ENCODE measurements at regions of chr4 and their contacts with region 1.

Region 1: GRCh38 chr4:121726642-121727268 is 30.0 kb upstream of the ANXA5 start:
- DNase-seq: peak; percentile 36
- H3K4me3 Mint-ChIP-seq: no peak overlapping the region
- H3K27ac Mint-ChIP-seq: no peak overlapping the region
- H3K4me1 Mint-ChIP-seq: peaks cover 5% of the 10 kb centered on the region
- H3K27me3 Mint-ChIP-seq: no peaks in the 10 kb centered on the region

Region 2: GRCh38 chr4:121370729-121371325 is 355.9 kb before region 1 on chr4:
- CTCF ChIA-PET with region 1: interaction called, 4 read pairs
- intact Hi-C with region 1: loop called (anchors 1 kb)
- DNase-seq: peak; percentile 66
- H3K4me3 Mint-ChIP-seq: no peak overlapping the region
- H3K27ac Mint-ChIP-seq: no peak overlapping the region
- H3K4me1 Mint-ChIP-seq: no peaks in the 10 kb centered on the region
- H3K27me3 Mint-ChIP-seq: peaks cover 9% of the 10 kb centered on the region

Region 3: DNA sequence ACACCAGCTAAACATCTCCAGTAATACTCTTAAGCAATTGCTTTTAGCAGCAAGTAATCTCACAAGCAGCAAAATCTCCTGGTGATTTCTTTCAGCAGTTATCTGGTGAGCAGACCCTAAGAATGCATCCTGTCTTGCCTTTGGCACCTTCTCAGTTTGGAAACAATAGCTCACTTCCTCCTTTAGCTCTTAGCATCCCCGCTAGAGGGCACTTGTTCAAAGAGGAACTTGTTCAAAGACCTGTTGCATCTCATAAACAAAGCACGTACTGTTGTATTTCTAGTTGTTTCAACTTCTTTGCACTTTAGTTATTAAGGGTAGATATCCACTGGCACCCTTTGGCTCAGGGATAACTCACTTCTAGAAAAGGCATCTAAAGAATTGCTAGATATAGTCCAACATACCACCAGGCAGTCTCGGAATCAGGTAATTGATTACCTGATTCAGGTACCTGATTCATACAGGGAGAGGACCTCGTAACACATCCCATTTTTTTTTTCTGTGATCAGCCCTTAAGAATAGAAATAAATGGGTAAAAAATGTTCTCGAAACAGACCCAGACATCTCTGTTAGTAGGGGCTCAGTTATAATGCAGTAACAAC is 264.0 kb before region 1 on chr4:
- CTCF ChIA-PET with region 1: interaction called, 5 read pairs
- intact Hi-C with region 1: loop called (anchors 1 kb)
- DNase-seq: peak; percentile 69
- H3K4me3 Mint-ChIP-seq: no peak overlapping the region
- H3K27ac Mint-ChIP-seq: no peak overlapping the region
- H3K4me1 Mint-ChIP-seq: no peaks in the 10 kb centered on the region
- H3K27me3 Mint-ChIP-seq: peaks cover 20% of the 10 kb centered on the region

Region 4: DNA sequence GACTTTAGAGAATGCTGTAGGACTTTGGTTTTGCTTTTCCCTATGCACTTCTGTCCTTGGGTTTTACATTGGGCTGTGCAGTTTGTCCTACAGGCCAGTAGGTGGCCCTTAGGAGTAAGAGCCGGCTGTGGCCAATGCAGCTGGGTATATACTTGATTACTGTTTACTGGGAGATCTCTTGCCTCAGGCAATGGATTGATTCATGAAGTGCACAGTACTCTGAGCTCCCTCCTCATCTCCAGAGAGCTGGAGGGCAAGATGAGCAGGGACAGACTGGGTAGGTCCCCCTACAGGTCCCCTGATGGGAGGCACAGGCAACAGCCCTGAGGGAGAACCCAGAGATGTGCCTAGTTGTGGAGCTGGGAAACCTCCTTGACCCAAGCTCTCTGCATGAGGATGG is 242.1 kb before region 1 on chr4:
- CTCF ChIA-PET with region 1: no interaction called
- intact Hi-C with region 1: loop called (anchors 1 kb)
- DNase-seq: peak; percentile 28
- H3K4me3 Mint-ChIP-seq: no peak overlapping the region
- H3K27ac Mint-ChIP-seq: no peak overlapping the region
- H3K4me1 Mint-ChIP-seq: no peaks in the 10 kb centered on the region
- H3K27me3 Mint-ChIP-seq: peaks cover 17% of the 10 kb centered on the region

Region 5: GRCh38 chr4:121656269-121656641 is 70.5 kb before region 1 on chr4:
- CTCF ChIA-PET with region 1: no interaction called
- intact Hi-C with region 1: loop called (anchors 2 kb)
- DNase-seq: peak; percentile 56
- H3K4me3 Mint-ChIP-seq: no peak overlapping the region
- H3K27ac Mint-ChIP-seq: no peak overlapping the region
- H3K4me1 Mint-ChIP-seq: no peaks in the 10 kb centered on the region
- H3K27me3 Mint-ChIP-seq: peaks cover 6% of the 10 kb centered on the region

Region 6: GRCh38 chr4:121696581-121697461 is 29.9 kb before region 1 on chr4 and contains the start of gene ANXA5:
- CTCF ChIA-PET with region 1: interaction called, 4 read pairs
- intact Hi-C with region 1: loop called (anchors 1 kb)
- DNase-seq: peak; percentile 79
- H3K4me3 Mint-ChIP-seq: peak within 1 kb of the TSS; percentile 93
- H3K27ac Mint-ChIP-seq: peak within 1 kb of the TSS; percentile 91
- H3K4me1 Mint-ChIP-seq: peaks cover 11% of the 10 kb centered on the region
- H3K27me3 Mint-ChIP-seq: peaks cover 14% of the 10 kb centered on the region
- total RNA-seq, gene ANXA5: 98.4 to 99.5 TPM

Region 7: DNA sequence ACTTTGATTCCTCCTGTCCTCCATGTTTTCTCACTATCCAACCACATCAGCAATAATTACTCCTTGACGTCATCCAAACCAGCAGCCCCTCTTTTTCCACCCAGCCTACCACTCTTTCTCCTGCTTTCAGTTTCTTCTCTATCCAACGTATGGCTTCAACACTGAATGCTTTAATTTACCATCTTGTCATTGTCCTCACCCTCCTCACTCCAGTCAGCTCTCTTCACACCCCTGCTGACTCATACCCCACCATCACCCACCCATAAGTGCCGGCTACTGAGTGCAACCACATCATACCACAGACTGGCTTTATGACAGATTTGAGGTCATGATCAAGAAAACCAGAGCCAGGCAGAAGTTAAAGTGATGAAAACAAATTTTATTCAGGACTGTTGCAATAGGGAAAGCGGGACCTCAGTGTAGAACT is 20.1 kb before region 1 on chr4:
- CTCF ChIA-PET with region 1: no interaction called
- intact Hi-C with region 1: loop called (anchors 2 kb)
- DNase-seq: peak; percentile 57
- H3K4me3 Mint-ChIP-seq: no peak overlapping the region
- H3K27ac Mint-ChIP-seq: peak overlapping the region; percentile 25
- H3K4me1 Mint-ChIP-seq: peaks cover 20% of the 10 kb centered on the region
- H3K27me3 Mint-ChIP-seq: peaks cover 23% of the 10 kb centered on the region

Measured in activated naive CD4-positive, alpha-beta T cell treated with anti-CD3 and anti-CD28 coated beads for 36 hours (primary cell).